ENCODE measurements at regions of chr16 and their contacts with region 1.

Region 1: DNA sequence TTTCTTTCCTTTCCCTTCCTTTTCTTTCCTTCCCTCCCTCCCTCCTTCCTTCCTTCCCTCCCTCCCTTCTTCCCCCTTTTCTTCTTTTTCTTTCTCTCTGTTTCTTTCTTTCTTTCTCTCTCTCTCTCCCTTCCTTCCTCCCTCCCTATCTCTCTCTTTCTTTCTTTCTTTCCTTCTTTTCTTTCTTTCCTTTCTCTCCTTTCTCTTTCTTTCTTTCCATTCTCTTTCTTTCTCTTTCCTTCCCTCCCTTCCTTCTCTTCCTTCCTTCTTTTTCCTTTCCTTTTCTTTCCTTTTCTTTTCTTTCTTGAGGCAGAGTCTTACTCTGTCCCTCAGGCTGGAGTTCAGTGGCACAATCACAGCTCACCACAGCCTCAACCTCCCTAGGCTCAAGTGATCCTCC is 31.0 kb downstream of the DEXI start:
- DNase-seq: no peak
- ATAC-seq: no peak
- H3K4me3 ChIP-seq: no peak overlapping the region
- H3K27ac ChIP-seq: no peak overlapping the region
- H3K4me1 ChIP-seq: no peaks in the 10 kb centered on the region
- H3K27me3 ChIP-seq: peaks cover 21% of the 10 kb centered on the region
- CTCF ChIP-seq: no peak
- POLR2A ChIP-seq: no peak
- RAD21 ChIP-seq: no peak

Region 2: DNA sequence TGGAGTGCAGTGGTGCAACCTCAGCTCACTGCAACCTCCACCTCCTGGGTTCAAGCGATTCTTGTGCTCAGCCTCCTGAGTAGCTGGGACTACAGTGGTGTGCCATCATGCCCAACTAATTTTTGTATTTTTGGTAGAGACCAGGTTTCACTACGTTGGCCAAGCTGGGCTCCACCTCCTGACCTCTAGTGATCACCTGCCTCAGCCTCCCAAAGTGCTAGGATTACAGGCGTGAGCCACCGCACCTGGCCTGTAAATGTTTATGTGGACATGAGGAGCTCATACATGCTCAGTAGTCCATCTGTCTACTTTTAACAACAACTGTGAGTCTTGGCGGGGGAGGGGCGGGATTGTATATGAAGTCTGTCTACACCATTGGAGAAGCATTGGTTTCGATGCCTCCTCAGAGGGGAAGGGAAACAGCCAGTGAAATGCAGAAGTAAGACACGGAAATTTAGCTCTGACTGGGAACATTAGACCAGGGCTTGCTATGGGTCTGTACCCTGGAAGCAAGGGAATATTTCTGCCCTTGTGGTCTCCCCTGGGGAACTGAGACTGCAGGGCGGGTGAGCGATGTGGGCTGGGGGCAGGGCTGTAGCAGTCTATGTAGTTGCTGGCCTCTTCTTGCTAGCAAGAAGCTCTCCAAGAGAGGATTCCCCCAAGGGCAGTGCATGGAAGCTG is 158.3 kb before region 1 on chr16:
- CTCF ChIA-PET with region 1: no interaction called
- POLR2A ChIA-PET with region 1: no interaction called
- dilution Hi-C with region 1: no loop called
- in situ Hi-C with region 1: loop called (anchors 5 kb)
- intact Hi-C with region 1: loop called (anchors 5 kb)
- DNase-seq: no peak
- ATAC-seq: no peak
- H3K4me3 ChIP-seq: no peak overlapping the region
- H3K27ac ChIP-seq: no peak overlapping the region
- H3K4me1 ChIP-seq: peaks cover 11% of the 10 kb centered on the region
- H3K27me3 ChIP-seq: no peaks in the 10 kb centered on the region
- CTCF ChIP-seq: no peak
- POLR2A ChIP-seq: no peak
- RAD21 ChIP-seq: no peak

Measured in IMR-90 (cell line).